AG04450 (cell line): ENCODE measurements at regions of chr10 and their contacts with region 1.

Region 1: DNA sequence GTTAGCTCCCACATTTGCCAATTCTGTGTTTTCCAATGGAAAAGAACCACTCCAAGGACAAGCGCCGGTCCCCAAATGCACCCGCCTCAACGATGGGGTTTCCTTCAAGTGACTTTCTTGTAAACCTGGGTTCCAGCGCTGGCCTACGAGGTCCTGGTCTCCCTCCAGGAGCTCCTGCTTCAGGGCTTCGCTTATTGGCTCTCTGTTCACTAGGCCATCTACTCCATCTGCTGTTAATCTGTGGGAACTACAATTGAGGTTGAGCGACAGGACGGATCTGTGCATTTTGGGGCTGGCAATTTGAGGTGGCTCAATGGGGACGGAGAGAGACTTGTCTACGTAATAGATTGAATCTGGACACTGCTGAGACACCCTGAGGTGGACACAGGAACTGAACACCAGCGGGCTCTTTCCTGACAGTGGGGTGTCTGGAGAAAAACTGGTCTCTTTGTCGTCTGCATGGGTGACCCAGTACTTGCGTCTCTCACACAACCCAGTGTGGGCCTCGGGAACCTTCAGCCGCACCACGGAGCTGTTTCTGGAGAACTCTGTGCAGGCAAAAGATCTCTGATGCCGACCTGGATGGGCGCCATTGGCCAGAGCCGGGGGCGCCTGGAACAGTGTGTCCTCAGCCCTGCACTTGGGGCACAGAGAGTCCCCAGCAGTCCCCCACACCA is 115.9 kb upstream of the ADAM12 start:
- DNase-seq: peak; percentile 23
- H3K4me3 ChIP-seq: no peak overlapping the region
- H3K27ac ChIP-seq: no peak overlapping the region
- H3K27me3 ChIP-seq: peaks cover 10% of the 10 kb centered on the region
- CTCF ChIP-seq: peak; percentile 82

Region 2: DNA sequence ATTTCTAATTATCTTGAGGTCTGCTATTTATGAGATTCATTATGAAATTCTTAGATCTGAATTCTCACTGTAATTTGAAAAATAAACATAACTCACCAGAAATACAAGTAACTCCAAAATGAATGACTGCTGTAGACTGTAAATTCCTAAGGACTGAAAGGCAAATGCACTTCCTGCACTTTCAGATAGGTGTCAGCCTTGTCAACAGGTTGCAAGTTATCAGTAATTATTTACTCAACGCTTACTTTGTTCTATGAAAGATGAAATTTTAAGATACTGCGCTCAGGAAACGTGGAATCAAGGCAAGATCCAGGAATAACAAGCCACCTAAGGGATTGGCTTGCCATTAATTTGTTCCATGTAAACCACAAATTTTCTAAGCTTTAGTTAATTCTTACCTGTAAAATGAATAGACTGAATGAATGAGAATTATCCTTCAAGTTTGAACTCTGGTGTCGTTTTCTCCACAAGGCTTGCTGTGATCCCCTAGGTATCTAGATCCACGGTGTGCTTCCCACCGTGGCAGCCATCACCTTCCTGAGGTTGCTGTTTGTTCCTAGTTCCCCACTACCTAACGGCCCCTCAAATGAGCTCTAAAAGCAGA is 635.7 kb before region 1 on chr10:
- CTCF ChIA-PET with region 1: interaction called, 28 read pairs
- POLR2A ChIA-PET with region 1: no interaction called
- DNase-seq: peak; percentile 32
- H3K4me3 ChIP-seq: no peak overlapping the region
- H3K27ac ChIP-seq: no peak overlapping the region
- H3K27me3 ChIP-seq: no peaks in the 10 kb centered on the region
- CTCF ChIP-seq: peak; percentile 80

Region 3: DNA sequence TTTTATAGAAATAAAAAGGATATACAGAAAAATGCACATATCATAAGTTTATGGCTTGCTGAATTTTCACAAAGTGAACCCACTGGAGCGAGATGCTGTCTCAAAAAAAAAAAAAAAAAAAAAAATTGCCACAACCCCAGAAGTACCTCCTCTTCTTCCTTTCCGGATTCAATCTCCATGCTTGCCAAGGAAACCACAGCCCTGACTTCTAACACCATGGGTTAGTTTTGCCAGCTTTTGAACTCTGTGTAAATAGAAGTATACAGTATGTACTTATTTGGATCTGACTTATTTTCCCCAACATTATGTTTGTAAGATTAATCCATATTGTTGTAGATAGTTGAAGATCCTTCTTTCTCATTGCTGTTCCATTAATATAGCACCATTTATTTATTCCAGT is 567.9 kb before region 1 on chr10:
- CTCF ChIA-PET with region 1: interaction called, 64 read pairs
- POLR2A ChIA-PET with region 1: no interaction called
- DNase-seq: no peak
- H3K4me3 ChIP-seq: no peak overlapping the region
- H3K27ac ChIP-seq: no peak overlapping the region
- H3K27me3 ChIP-seq: peaks cover 8% of the 10 kb centered on the region
- CTCF ChIP-seq: no peak

Region 4: GRCh38 chr10:125976960-125977603 is 527.1 kb before region 1 on chr10:
- CTCF ChIA-PET with region 1: interaction called, 104 read pairs
- POLR2A ChIA-PET with region 1: no interaction called
- DNase-seq: no peak
- H3K4me3 ChIP-seq: no peak overlapping the region
- H3K27ac ChIP-seq: no peak overlapping the region
- H3K27me3 ChIP-seq: no peaks in the 10 kb centered on the region
- CTCF ChIP-seq: no peak

Region 5: DNA sequence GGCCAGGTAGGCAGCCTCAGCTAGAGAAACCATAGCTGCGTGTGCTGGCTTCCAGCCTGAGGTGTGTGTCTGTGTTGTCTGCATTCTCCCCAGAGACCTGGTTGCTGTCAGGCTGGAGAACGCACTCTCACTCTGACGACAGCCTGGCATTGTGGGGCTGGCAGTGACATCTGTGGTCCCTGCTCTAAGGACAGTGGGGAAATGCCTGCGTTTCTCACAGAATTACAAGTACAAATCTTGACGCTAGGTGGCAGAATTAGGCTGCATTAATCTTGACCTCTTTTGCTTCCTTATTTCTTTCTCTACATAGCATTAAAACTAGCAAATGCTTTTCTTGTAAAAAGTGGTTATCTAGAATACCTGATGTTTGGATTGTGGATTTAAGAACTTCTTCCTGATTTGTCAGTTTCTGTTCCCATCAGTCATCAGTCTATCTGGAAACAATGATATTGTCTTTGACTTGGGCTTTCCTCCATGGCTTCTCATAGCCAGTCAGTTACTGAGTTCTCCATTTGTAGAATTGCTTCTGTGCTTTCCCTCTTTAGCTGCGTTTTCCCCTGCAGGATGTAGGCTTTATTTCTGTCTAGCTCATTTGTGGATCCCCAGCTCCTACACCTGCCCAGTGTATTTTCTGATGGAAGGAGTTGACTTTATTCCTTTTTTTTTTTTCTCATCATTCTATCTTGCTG is 521.8 kb before region 1 on chr10:
- CTCF ChIA-PET with region 1: interaction called, 104 read pairs
- POLR2A ChIA-PET with region 1: no interaction called
- DNase-seq: peak; percentile 23
- H3K4me3 ChIP-seq: no peak overlapping the region
- H3K27ac ChIP-seq: no peak overlapping the region
- H3K27me3 ChIP-seq: no peaks in the 10 kb centered on the region
- CTCF ChIP-seq: peak; percentile 58

Region 6: GRCh38 chr10:126387023-126387921 is 116.9 kb before region 1 on chr10:
- CTCF ChIA-PET with region 1: interaction called, 16 read pairs
- POLR2A ChIA-PET with region 1: no interaction called
- DNase-seq: no peak
- H3K4me3 ChIP-seq: peak overlapping the region; percentile 65
- H3K27ac ChIP-seq: peak overlapping the region; percentile 31
- H3K27me3 ChIP-seq: no peaks in the 10 kb centered on the region
- CTCF ChIP-seq: peak; percentile 85

Region 7: GRCh38 chr10:126468876-126469643 is 35.1 kb before region 1 on chr10:
- CTCF ChIA-PET with region 1: interaction called, 10 read pairs
- POLR2A ChIA-PET with region 1: no interaction called
- DNase-seq: no peak
- H3K4me3 ChIP-seq: no peak overlapping the region
- H3K27ac ChIP-seq: no peak overlapping the region
- H3K27me3 ChIP-seq: peaks cover 6% of the 10 kb centered on the region
- CTCF ChIP-seq: no peak